CD8-positive, alpha-beta T cell (primary cell): ENCODE measurements at regions of chr18 and their contacts with region 1.

Region 1: GRCh38 chr18:9506046-9506792 is 30.9 kb downstream of the RALBP1 start:
- DNase-seq: no peak
- ATAC-seq: no peak
- H3K4me3 ChIP-seq: no peak overlapping the region
- H3K4me3 Mint-ChIP-seq: no peak overlapping the region
- H3K27ac ChIP-seq: no peak overlapping the region
- H3K27ac Mint-ChIP-seq: no peak overlapping the region
- H3K4me1 ChIP-seq: peaks cover 3% of the 10 kb centered on the region
- H3K4me1 Mint-ChIP-seq: peaks cover 45% of the 10 kb centered on the region
- H3K27me3 ChIP-seq: no peaks in the 10 kb centered on the region
- H3K27me3 Mint-ChIP-seq: no peaks in the 10 kb centered on the region
- CTCF ChIP-seq: no peak

Region 2: GRCh38 chr18:9404565-9405060 is 101.6 kb before region 1 on chr18:
- CTCF ChIA-PET with region 1: no interaction called
- POLR2A ChIA-PET with region 1: no interaction called
- intact Hi-C with region 1: no loop called
- DNase-seq: peak in 6 of 9 experiments; percentile 2 to 33 (median 12)
- ATAC-seq: peak; percentile 56
- H3K4me3 ChIP-seq: peak overlapping the region; percentile 15 to 27
- H3K4me3 Mint-ChIP-seq: peak overlapping the region; percentile 78
- H3K27ac ChIP-seq: no peak overlapping the region
- H3K27ac Mint-ChIP-seq: no peak overlapping the region
- H3K4me1 ChIP-seq: no peaks in the 10 kb centered on the region
- H3K4me1 Mint-ChIP-seq: peaks cover 14% of the 10 kb centered on the region
- H3K27me3 ChIP-seq: no peaks in the 10 kb centered on the region
- H3K27me3 Mint-ChIP-seq: no peaks in the 10 kb centered on the region
- CTCF ChIP-seq: no peak

Region 3: GRCh38 chr18:9494766-9495331 is 11.4 kb before region 1 on chr18:
- CTCF ChIA-PET with region 1: interaction called, 3 read pairs
- POLR2A ChIA-PET with region 1: no interaction called
- intact Hi-C with region 1: loop called in 1 of 2 experiments (anchors 1 kb)
- DNase-seq: peak in 1 of 9 experiments; percentile 43
- ATAC-seq: no peak
- H3K4me3 ChIP-seq: no peak overlapping the region
- H3K4me3 Mint-ChIP-seq: no peak overlapping the region
- H3K27ac ChIP-seq: no peak overlapping the region
- H3K27ac Mint-ChIP-seq: no peak overlapping the region
- H3K4me1 ChIP-seq: peaks cover 10% of the 10 kb centered on the region
- H3K4me1 Mint-ChIP-seq: peaks cover 41% of the 10 kb centered on the region
- H3K27me3 ChIP-seq: no peaks in the 10 kb centered on the region
- H3K27me3 Mint-ChIP-seq: no peaks in the 10 kb centered on the region
- CTCF ChIP-seq: no peak

Region 4: DNA sequence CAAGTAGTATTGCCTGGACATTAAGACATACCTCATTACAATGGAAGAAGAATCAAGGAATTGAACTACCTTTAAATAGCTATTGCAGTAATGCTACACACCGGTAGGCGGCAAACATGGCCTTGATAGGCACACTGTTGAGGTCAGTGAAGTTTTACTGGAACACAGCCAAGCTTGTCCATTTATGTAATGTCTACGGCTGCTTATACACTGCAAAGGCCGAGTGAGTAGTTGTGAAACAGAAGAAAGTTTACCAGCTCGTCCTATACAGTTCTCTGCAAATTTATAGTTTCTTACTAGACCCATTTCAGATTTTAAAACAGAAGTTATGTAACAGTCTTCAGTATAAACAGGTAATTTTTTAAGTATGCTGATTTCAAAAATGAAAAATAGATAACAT is 69.3 kb after region 1 on chr18:
- CTCF ChIA-PET with region 1: no interaction called
- POLR2A ChIA-PET with region 1: no interaction called
- intact Hi-C with region 1: no loop called
- DNase-seq: peak in 3 of 9 experiments; percentile 14 to 45 (median 26)
- ATAC-seq: no peak
- H3K4me3 ChIP-seq: no peak overlapping the region
- H3K4me3 Mint-ChIP-seq: no peak overlapping the region
- H3K27ac ChIP-seq: no peak overlapping the region
- H3K27ac Mint-ChIP-seq: no peak overlapping the region
- H3K4me1 ChIP-seq: no peaks in the 10 kb centered on the region
- H3K4me1 Mint-ChIP-seq: no peaks in the 10 kb centered on the region
- H3K27me3 ChIP-seq: no peaks in the 10 kb centered on the region
- H3K27me3 Mint-ChIP-seq: no peaks in the 10 kb centered on the region
- CTCF ChIP-seq: peak; percentile 29